ENCODE measurements at regions of chr10 and their contacts with region 1.

Region 1: DNA sequence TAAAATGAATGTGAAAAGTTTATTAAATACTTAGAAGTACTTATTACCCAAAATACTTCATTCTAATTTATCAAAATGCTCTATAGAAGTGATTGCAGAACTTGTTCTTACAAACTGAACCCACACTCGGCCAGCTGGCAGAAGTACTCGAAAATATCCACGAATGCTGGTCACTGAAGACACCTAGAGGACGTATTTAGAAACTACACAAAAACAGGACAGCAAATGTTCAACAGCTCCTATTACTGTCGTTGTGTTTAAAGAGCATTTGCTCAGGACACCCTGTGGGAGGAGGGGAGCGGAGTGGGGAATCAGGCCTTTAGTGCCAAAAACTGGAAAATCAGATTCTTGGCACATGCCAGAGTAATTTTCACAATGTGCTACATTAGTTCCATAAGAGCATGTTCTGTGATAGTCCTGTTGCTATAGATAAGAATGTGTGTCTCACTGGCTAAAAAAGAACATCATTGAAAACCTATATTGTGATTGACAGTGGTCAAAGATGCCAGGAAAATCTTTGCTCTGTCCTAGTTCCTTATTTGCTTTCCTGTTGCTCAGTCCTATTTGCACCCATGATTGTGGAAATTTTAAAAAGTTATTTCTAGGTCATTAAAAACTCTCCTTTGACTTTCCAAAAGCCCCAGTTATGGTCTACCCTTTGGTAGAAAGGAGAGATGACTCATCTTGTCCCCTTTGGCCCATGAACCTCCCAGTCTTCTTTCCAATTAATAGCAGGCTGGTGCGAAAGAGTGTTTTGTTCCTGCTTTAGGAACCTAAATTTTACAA is 49.0 kb upstream of the NRBF2 start:
- DNase-seq: peak; percentile 52
- H3K4me3 Mint-ChIP-seq: no peak overlapping the region
- H3K27ac Mint-ChIP-seq: no peak overlapping the region
- H3K4me1 Mint-ChIP-seq: no peaks in the 10 kb centered on the region
- H3K27me3 Mint-ChIP-seq: peaks cover 4% of the 10 kb centered on the region

Region 2: GRCh38 chr10:62437696-62438095 is 646.4 kb before region 1 on chr10:
- CTCF ChIA-PET with region 1: no interaction called
- intact Hi-C with region 1: loop called (anchors 1 kb)
- DNase-seq: no peak
- H3K4me3 Mint-ChIP-seq: no peak overlapping the region
- H3K27ac Mint-ChIP-seq: no peak overlapping the region
- H3K4me1 Mint-ChIP-seq: peaks cover 19% of the 10 kb centered on the region
- H3K27me3 Mint-ChIP-seq: peaks cover 10% of the 10 kb centered on the region

Region 3: GRCh38 chr10:62492012-62492869 is 591.9 kb before region 1 on chr10:
- CTCF ChIA-PET with region 1: interaction called, 3 read pairs
- intact Hi-C with region 1: loop called (anchors 1 kb)
- DNase-seq: peak; percentile 8
- H3K4me3 Mint-ChIP-seq: no peak overlapping the region
- H3K27ac Mint-ChIP-seq: no peak overlapping the region
- H3K4me1 Mint-ChIP-seq: no peaks in the 10 kb centered on the region
- H3K27me3 Mint-ChIP-seq: no peaks in the 10 kb centered on the region

Region 4: DNA sequence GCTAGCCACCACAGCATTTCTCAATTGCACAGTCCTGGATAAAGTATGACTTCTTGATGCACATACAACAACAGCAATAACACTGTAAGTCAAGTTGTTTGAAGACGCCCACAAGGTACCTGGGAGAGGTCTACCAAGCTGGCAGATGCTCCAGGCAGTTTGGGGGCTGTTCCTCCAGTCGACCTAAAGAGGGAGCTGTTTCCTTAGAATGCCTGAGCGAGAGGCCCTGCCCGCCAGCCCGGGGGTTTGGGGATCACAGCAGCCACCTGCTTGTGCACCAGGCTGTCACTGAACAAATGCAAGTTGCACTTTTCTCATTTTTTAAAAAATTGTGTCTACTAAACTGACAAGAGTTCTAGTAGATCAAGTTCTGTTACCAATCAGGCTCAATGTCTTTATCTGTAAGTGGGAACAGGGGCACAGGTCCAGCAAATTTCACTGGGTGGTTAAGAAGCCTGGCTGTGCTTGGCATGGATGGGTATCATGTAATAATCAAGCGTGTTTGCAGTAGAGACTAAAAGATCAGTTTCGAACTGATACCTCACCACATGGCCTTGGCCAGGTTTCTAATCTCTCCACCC is 473.4 kb before region 1 on chr10:
- CTCF ChIA-PET with region 1: interaction called, 4 read pairs
- intact Hi-C with region 1: loop called (anchors 1 kb)
- DNase-seq: peak; percentile 83
- H3K4me3 Mint-ChIP-seq: no peak overlapping the region
- H3K27ac Mint-ChIP-seq: no peak overlapping the region
- H3K4me1 Mint-ChIP-seq: peaks cover 31% of the 10 kb centered on the region
- H3K27me3 Mint-ChIP-seq: peaks cover 5% of the 10 kb centered on the region

Region 5: GRCh38 chr10:62851442-62851841 is 232.7 kb before region 1 on chr10:
- CTCF ChIA-PET with region 1: interaction called, 3 read pairs
- intact Hi-C with region 1: loop called (anchors 2 kb)
- DNase-seq: peak; percentile 39
- H3K4me3 Mint-ChIP-seq: no peak overlapping the region
- H3K27ac Mint-ChIP-seq: no peak overlapping the region
- H3K4me1 Mint-ChIP-seq: peaks cover 29% of the 10 kb centered on the region
- H3K27me3 Mint-ChIP-seq: peaks cover 10% of the 10 kb centered on the region

Region 6: DNA sequence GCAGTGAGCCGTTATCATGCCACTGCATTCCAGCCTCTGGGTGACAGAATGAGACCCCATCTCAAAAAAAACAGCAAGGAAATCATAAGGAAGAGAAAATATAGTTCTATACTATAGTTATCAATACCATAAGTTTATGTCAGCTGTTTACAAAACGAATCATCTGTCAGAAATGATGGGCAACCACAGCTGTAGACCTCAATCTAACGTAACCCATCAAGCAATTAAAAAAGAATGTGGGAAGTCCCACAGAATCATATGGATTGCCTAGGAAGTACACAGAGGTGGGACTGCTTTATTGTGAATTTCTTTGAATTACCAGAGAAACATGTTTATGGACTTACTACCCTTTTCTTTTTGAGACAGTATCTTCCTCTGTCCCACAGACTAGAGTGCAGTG is 56.0 kb after region 1 on chr10:
- CTCF ChIA-PET with region 1: no interaction called
- intact Hi-C with region 1: no loop called
- DNase-seq: no peak
- H3K4me3 Mint-ChIP-seq: no peak overlapping the region
- H3K27ac Mint-ChIP-seq: no peak overlapping the region
- H3K4me1 Mint-ChIP-seq: peaks cover 64% of the 10 kb centered on the region
- H3K27me3 Mint-ChIP-seq: no peaks in the 10 kb centered on the region

Region 7: DNA sequence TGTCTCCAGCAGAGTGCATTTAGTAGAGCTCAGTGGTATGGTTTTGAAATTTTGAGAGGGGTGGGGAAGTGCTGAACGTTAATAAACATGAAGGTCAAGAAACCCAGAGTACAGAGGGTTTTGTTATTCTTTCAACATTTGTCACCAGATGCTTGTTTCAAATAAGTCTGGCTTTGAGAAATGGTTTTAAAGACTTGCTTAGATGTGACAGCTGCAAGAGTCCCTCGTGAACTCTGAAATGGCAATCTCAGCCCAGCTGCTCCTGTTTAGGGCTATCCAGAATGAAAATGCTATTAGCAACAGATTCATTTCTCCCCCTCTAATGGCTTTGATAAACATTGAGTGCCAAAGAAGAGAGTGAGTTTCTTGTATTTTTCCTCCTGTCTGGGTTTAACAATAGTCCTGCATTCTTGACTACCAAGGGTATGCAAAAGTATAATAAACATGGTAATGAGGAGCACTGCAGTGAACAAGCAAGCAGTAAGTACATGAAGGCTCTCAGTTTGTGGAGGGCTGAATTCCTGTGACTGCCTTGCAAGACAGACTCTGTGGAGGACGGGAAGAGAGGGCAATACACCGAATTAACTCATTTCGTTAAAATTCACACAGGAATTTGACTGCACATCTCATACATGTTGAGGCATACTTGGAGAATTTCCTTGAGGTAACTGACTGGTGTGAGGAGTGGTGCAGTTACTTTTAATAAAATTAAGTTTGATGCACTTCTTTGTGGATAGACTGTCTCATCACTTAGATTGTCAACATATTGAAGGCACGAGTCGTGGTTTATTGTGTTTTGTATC is 928.0 kb after region 1 on chr10:
- CTCF ChIA-PET with region 1: no interaction called
- intact Hi-C with region 1: no loop called
- DNase-seq: no peak
- H3K4me3 Mint-ChIP-seq: no peak overlapping the region
- H3K27ac Mint-ChIP-seq: no peak overlapping the region
- H3K4me1 Mint-ChIP-seq: no peaks in the 10 kb centered on the region
- H3K27me3 Mint-ChIP-seq: no peaks in the 10 kb centered on the region

Measured in activated naive CD4-positive, alpha-beta T cell treated with anti-CD3 and anti-CD28 coated beads for 36 hours (primary cell).